ENCODE measurements at regions of chr15 and their contacts with region 1.

Region 1: DNA sequence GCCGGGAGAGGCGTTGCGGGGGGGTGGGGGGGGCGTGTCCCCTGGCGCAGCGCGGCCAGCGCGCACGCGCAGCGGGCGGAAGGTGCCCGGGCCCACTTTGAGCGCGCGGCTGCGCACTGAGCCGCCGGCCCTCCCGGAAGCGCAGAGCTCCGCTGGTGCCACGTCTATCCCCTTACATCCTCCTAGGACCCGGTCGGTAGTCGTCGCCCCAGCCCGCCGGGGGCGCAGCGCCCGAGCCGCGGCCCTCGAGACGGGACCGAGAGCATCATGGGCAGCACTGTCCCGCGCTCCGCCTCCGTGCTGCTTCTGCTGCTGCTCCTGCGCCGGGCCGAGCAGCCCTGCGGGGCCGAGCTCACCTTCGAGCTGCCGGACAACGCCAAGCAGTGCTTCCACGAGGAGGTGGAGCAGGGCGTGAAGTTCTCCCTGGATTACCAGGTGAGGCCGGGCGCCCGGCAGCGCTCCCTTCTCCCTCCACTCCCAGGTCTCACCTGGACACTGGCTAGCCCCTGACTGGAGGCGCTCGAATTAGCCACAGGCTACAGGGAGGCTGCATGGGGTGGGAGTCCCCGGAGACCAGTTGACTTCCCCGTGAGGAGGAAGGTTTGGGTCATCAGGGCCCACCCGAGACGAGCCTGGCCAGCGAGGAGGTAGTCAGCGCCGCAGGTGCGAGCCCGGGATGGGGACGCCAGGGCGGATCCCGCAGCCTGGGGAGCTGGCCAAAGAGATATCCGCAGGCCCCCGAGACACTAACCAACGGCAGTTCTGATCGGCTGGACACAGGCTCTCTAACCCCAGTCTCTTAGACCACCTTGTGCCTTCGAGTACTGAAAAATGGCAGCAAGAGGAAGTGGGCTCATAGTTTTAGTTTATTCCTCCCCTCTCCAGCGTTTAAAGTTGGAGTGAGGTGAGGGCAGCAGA is at the start of gene TMED3:
- DNase-seq: peak; percentile 80 to 92
- ATAC-seq: peak; percentile 90
- H3K4me3 ChIP-seq: peak within 1 kb of the TSS; percentile 62 to 65
- H3K27ac ChIP-seq: no peak within 1 kb of the TSS
- H3K4me1 ChIP-seq: peaks cover 0 to 4% of the 10 kb centered on the region in 2 donors
- H3K27me3 ChIP-seq: no peaks in the 10 kb centered on the region
- total RNA-seq, gene TMED3: 47.9 to 49.3 TPM

Region 2: DNA sequence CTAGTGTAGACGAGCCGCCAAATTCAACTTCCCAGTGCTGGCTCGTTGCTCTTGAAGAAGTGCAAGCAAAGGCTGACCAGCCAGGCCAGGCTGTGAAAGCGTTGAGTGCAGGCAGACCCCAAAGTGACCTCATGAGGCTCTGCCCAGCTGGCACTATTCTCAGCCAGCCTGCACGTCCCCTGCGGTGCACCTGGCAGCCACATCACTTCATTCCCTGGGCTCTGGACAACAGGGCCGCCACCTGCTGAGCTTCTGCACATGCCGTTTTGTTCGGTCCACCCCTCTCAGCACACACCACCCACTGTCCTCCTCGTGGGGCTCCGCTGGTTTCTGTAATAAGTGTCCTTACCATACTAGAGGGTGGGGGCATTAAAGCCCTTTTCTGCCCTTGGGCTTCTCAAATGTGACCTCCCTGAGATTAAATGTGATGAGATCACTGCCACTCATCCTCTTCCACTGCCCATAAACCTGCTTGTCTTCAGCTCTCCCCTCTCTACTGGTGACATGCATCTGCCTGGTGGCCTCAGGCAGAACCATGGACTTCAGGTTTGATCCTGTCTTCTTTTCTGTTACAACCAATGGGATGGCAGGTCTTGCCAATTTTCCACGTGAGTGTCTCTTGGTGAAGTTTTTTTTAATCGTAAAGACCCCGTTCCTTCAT is 226.8 kb before region 1 on chr15:
- intact Hi-C with region 1: no loop called
- DNase-seq: peak in 1 of 2 donors; percentile 62
- ATAC-seq: no peak
- H3K4me3 ChIP-seq: no peak overlapping the region
- H3K27ac ChIP-seq: no peak overlapping the region
- H3K4me1 ChIP-seq: no peaks in the 10 kb centered on the region
- H3K27me3 ChIP-seq: no peaks in the 10 kb centered on the region

Region 3: DNA sequence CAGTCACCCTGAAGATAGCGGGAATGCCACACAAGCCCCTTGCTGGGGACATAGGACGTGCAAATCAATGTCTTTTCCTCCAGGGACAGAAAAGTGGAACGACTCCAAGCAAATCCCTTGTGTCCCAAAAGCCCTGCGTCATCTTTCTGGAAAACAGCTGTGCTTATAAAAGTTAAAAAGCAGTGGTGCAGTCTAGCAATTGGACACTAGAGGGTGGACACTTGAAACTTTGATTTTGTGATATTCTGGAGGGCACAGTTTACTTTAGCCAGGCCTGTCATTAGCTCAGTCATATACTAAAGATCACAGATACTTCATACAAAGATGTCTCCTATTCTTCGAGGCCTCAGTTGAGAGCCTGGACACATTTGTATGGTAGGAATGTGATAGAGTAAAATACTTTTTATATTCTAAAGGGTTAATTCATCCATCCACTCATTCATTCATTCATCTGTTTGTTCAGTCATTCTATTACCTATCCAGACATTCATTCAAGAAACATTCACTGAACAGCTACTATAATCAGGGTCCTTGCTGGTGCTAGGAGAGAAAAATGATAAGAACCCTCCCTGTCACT is 92.6 kb before region 1 on chr15:
- intact Hi-C with region 1: loop called (anchors 5 kb)
- DNase-seq: no peak
- ATAC-seq: peak; percentile 54
- H3K4me3 ChIP-seq: no peak overlapping the region
- H3K27ac ChIP-seq: peak overlapping the region in 1 of 2 donors; percentile 30
- H3K4me1 ChIP-seq: peaks cover 4 to 5% of the 10 kb centered on the region in 2 donors
- H3K27me3 ChIP-seq: no peaks in the 10 kb centered on the region